Activated naive CD4-positive, alpha-beta T cell treated with anti-CD3 and anti-CD28 coated beads for 36 hours (primary cell): ENCODE measurements at regions of chr1 and their contacts with region 1.

Region 1: DNA sequence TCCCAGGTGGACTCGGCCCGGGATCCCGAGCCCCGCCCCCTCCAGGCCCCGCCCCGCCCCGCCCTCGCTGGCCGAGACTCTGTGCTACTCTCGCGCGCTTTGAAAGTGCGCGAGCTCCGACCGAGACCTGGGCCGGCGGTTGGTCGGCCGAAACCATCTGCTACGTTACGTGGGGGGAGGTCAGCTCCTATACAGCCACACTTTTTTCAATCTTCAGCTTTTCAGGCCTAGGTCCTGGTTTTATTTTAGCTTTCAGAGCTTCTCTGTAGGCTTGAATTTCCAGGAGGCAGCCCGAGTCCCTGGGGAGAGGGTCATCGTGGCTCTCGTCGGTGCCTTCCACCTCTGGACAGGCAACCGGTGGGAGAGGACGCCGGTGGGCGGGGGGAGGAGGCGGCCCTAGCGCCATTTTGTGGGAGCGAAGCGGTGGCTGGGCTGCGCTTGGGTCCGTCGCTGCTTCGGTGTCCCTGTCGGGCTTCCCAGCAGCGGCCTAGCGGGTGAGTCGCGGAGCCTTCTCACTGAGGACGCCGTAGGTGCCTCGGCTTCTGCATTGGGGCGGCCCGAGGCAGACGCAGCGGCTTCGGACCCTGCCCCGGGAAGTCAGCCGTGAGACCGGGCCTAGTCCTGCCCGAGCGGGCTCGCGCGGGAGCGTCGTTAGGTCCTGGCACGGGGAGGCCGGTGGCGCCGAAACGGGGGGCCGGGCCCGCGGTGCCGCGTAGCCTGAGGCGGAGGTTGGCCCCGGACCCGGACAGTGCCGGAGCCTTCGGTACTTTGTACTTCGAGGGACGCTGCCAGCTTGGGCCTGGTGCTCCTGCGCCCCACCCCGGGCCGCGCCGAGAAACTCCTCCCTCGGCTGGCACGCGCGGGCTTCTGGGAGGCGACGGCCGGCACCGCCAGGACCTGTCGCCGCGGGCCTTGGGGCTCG is at the start of gene TARDBP:
- DNase-seq: peak; percentile 92
- H3K4me3 Mint-ChIP-seq: peak within 1 kb of the TSS; percentile 88
- H3K27ac Mint-ChIP-seq: peak within 1 kb of the TSS; percentile 98
- H3K4me1 Mint-ChIP-seq: peaks cover 29% of the 10 kb centered on the region
- H3K27me3 Mint-ChIP-seq: no peaks in the 10 kb centered on the region
- total RNA-seq, gene TARDBP: 158 to 159 TPM

Region 2: DNA sequence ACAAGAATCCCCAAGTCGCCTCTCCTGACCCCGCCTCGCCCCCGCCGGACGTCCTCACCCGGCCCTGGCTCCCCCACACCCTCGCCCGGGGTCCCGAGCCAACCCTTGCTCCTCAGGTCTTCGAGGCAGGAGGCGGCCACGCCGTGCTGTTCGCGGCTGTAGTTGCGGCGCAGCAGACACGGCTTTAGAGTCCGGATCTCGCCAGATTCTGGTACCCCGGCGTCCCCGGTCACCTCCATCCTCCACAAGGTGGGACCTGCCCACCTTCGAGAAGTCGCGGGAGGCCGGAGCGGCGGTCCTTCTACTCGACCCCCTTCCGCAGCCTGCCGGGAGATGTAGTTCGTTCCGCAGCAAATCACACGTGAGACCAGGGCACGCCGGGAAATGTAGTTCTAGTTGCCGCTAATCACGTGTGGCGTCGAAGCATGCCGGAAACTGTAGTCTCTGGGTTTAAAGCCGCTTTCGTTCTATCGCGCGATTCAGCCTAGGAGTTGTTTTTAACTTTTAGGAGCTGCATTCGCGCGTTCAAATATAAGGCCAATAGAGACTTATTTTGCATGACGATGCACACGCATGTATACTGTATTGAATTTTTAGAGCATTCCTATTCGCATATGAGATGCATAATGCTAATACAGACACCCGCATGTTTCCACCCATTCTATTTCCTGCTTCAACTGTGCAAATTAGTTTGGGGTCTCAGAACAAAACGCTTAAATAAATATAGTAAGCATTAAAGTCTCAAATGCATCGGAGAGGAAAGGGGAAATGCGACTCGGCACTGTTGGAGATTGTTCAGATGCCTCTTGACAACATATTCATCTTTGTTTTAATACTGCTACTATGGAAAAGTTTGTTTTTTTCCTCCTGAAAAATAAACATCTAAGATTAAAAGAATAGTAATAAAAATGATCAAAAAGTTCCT is 540.0 kb before region 1 on chr1 and contains the start of gene DFFA:
- CTCF ChIA-PET with region 1: no interaction called
- intact Hi-C with region 1: loop called (anchors 5 kb)
- DNase-seq: peak; percentile 97
- H3K4me3 Mint-ChIP-seq: peak within 1 kb of the TSS; percentile 90
- H3K27ac Mint-ChIP-seq: peak within 1 kb of the TSS; percentile 84
- H3K4me1 Mint-ChIP-seq: peaks cover 38% of the 10 kb centered on the region
- H3K27me3 Mint-ChIP-seq: no peaks in the 10 kb centered on the region
- total RNA-seq, gene DFFA: 34.2 to 36.1 TPM

Region 3: GRCh38 chr1:11059990-11060830 is 47.7 kb after region 1 on chr1 and contains the start of gene SRM:
- CTCF ChIA-PET with region 1: no interaction called
- intact Hi-C with region 1: loop called (anchors 1 kb)
- DNase-seq: peak; percentile 89
- H3K4me3 Mint-ChIP-seq: peak within 1 kb of the TSS; percentile 95
- H3K27ac Mint-ChIP-seq: peak within 1 kb of the TSS; percentile 82
- H3K4me1 Mint-ChIP-seq: peaks cover 45% of the 10 kb centered on the region
- H3K27me3 Mint-ChIP-seq: no peaks in the 10 kb centered on the region
- total RNA-seq, gene SRM: 207 to 222 TPM

Region 4: GRCh38 chr1:11099310-11100149 is 87.0 kb after region 1 on chr1 and contains the start of gene EXOSC10:
- CTCF ChIA-PET with region 1: interaction called, 5 read pairs
- intact Hi-C with region 1: loop called (anchors 1 kb)
- DNase-seq: peak; percentile 95
- H3K4me3 Mint-ChIP-seq: peak within 1 kb of the TSS; percentile 96
- H3K27ac Mint-ChIP-seq: peak within 1 kb of the TSS; percentile 90
- H3K4me1 Mint-ChIP-seq: peaks cover 8% of the 10 kb centered on the region
- H3K27me3 Mint-ChIP-seq: no peaks in the 10 kb centered on the region
- total RNA-seq, gene EXOSC10: 57.9 to 59.3 TPM